Activated CD4-positive, alpha-beta T cell treated with anti-CD3 and anti-CD28 coated beads, Interleukin-2, amount 10 ng/mL, durations not matched to agents 24 days and 14 days (primary cell): ENCODE measurements at regions of chr12 and their contacts with region 1.

Region 1: GRCh38 chr12:50555471-50555885 is 50.7 kb downstream of the DIP2B start:
- DNase-seq: no peak
- H3K4me3 Mint-ChIP-seq: peak overlapping the region; percentile 59
- H3K27ac Mint-ChIP-seq: peak overlapping the region; percentile 91
- H3K4me1 Mint-ChIP-seq: peaks cover 18% of the 10 kb centered on the region
- H3K27me3 Mint-ChIP-seq: no peaks in the 10 kb centered on the region

Region 2: GRCh38 chr12:50517456-50518048 is 37.9 kb before region 1 on chr12:
- intact Hi-C with region 1: loop called (anchors 1 kb)
- DNase-seq: peak; percentile 76
- H3K4me3 Mint-ChIP-seq: no peak overlapping the region
- H3K27ac Mint-ChIP-seq: no peak overlapping the region
- H3K4me1 Mint-ChIP-seq: peaks cover 48% of the 10 kb centered on the region
- H3K27me3 Mint-ChIP-seq: no peaks in the 10 kb centered on the region

Region 3: DNA sequence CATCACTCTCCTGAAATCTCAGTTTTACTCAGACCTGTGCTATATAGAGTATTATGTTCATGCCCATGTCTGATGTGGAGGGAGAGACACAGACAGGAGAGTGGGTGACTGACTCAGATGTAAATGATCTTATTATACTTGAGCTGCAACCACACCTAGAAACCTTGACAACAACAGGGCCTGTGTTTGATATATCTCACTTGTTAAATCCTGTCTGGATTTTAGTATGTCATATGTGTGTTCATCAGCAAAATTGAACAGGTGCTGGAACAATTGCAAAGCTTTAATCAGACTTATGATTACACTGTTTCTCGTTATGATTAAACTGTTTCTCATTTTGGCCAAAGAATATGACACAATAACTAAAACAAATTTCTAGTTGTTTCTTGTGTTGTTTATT is 13.0 kb before region 1 on chr12:
- intact Hi-C with region 1: loop called (anchors 1 kb)
- DNase-seq: peak; percentile 65
- H3K4me3 Mint-ChIP-seq: no peak overlapping the region
- H3K27ac Mint-ChIP-seq: peak overlapping the region; percentile 91
- H3K4me1 Mint-ChIP-seq: peaks cover 29% of the 10 kb centered on the region
- H3K27me3 Mint-ChIP-seq: no peaks in the 10 kb centered on the region